Cardiac septum (tissue), 1 donor: ENCODE measurements at regions of chr1 and their contacts with region 1.

Region 1: GRCh38 chr1:201792534-201793305 is 36.2 kb upstream of the IPO9 start:
- DNase-seq: peak; percentile 83

Region 2: GRCh38 chr1:201530741-201531531 is 261.8 kb before region 1 on chr1:
- intact Hi-C with region 1: loop called (anchors 2 kb)
- DNase-seq: peak; percentile 90

Region 3: DNA sequence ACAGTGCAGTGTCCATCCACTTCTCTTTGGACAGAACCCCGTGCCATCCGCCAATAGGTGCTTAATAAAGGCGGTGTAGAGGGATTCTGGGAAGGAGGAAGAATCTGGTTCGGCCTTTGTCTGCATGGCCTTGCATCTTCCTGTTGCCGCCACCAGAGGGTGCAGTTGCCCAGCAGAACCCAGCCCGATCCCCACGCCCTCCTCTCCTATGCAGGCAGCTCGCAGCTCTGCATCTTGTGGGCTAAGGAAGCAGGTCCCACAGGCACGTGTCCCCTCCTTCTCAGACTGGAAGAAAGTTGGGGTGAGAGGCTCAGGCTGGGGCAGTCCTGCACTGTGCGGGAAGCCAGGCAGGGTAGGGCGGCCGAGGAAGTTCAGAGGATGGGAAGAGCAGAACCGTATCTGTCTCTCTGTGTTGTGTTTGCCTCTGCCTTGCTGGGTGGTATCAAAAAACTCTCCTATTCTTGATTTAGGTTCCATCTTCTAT is 233.0 kb before region 1 on chr1:
- intact Hi-C with region 1: loop called (anchors 1 kb)
- DNase-seq: peak; percentile 93

Region 4: DNA sequence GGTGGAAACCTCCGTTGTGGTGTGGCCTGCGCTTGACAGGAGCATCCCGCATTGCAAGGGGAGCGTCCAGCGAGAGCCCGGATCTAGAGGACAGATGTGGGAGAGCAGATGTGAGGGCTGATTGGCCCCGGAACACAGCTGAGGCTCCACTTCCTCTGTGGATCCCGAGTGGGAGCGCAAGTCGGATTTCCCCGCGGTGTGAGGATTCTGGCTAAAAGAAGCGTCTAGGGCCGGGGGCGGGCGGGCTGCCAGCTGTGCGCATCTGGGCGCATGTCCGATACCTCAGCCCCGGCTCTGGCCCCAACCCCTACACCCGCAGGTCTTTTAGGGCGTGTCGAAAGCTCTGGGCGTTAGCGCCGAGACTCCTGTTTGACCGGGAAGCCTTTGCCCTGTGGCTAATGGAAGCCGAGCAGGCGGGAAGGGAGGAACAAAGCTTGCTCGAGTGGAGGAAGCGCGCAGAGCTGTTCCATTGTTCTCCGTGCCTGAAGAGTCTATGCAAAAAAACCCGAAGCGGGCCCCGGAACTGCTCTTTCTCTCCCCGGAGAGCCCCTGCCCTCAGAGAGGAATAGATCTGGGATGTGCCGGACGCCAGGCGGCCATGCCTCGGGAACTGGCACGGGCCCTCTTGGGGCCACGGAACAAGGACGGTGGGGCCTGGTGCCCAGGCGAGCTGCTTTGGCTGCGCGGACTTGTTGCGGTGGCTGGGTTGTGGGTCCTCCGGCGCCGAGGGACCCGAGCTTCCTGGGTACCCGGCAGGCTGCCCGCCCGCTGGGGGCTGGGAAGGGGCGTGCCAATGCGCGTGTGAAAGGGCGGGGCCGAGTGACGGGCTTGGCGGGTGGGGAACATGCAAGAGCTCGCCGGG is 142.7 kb before region 1 on chr1:
- intact Hi-C with region 1: loop called (anchors 5 kb)
- DNase-seq: peak; percentile 91

Region 5: GRCh38 chr1:201709564-201710295 is 83.0 kb before region 1 on chr1:
- intact Hi-C with region 1: loop called (anchors 1 kb)
- DNase-seq: peak; percentile 84